Body of pancreas (tissue), 4 donors: ENCODE measurements at regions of chr10 and their contacts with region 1.

Region 1: DNA sequence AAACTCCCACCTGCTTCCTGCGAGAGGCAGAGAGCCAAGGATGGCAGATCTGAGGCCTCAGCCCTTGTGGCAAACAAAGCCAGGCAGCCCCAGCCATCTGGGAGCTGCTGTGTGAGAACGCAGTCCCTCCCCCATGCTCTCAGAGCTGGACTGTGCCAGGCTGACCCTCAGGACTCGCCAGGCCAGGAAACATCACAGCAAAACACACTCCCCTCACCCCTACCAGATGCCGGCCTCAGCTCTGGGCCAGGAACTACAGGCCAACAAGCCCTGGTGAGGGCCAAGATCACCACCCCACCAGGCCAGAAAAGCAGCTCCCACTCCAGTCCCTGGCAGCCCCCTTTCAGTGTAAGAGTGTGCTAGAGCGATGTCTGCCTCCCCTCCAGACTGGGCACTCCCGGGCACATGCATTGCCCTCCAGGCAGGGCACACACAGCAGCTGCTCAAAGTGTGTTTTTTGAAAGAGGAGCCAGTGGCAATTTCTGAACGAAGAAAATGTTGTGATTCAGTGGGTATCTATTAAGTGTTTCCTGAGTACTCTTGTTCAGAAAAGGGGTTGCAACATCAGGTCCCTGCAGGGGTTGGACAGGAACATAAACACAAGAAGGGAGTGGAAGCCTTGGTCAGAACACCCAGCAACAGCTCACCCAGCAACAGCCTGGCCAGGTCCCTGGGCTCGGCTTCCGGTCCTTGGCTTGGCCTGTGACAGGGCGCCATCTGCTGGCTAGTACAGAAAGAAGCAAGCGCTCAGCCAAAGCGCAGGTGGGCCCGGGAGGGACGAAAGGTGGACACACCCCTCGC is 18.3 kb downstream of the LRRC20 start:
- DNase-seq: peak; percentile 92 to 95 (median 94)
- ATAC-seq: peak; percentile 98
- H3K4me3 ChIP-seq: no peak overlapping the region
- H3K27ac ChIP-seq: peak overlapping the region in 3 of 4 donors; percentile 56 to 63 (median 56)
- H3K4me1 ChIP-seq: peaks cover 11% of the 10 kb centered on the region
- H3K27me3 ChIP-seq: no peaks in the 10 kb centered on the region
- CTCF ChIP-seq: peak; percentile 75 to 97 (median 93)
- POLR2A ChIP-seq: peak in 1 of 3 donors; percentile 9

Region 2: GRCh38 chr10:70221030-70221429 is 143.1 kb before region 1 on chr10:
- intact Hi-C with region 1: loop called (anchors 5 kb)
- DNase-seq: no peak
- ATAC-seq: no peak
- H3K4me3 ChIP-seq: no peak overlapping the region
- H3K27ac ChIP-seq: peak overlapping the region in 2 of 4 donors; percentile 28 to 72
- H3K4me1 ChIP-seq: peaks cover 20% of the 10 kb centered on the region
- H3K27me3 ChIP-seq: no peaks in the 10 kb centered on the region
- CTCF ChIP-seq: no peak
- POLR2A ChIP-seq: no peak

Region 3: GRCh38 chr10:70233109-70233938 is 130.8 kb before region 1 on chr10 and contains the start of gene PPA1:
- intact Hi-C with region 1: loop called (anchors 5 kb)
- DNase-seq: peak; percentile 98 to 99 (median 98)
- ATAC-seq: peak; percentile 95
- H3K4me3 ChIP-seq: peak within 1 kb of the TSS; percentile 76 to 85
- H3K27ac ChIP-seq: peak within 1 kb of the TSS; percentile 89 to 97 (median 95)
- H3K4me1 ChIP-seq: peaks cover 26% of the 10 kb centered on the region
- H3K27me3 ChIP-seq: no peaks in the 10 kb centered on the region
- CTCF ChIP-seq: peak; percentile 11 to 58 (median 39)
- POLR2A ChIP-seq: peak; percentile 89 to 97 (median 93)
- total RNA-seq, gene PPA1: 101 to 108 TPM